Breast epithelium (tissue), 4 donors: ENCODE measurements at regions of chrX and their contacts with region 1.

Region 1: GRCh38 chrX:66882101-66882500 is 243.2 kb upstream of the EDA2R start:
- DNase-seq: no peak
- H3K4me3 ChIP-seq: no peak overlapping the region
- H3K27ac ChIP-seq: no peak overlapping the region
- H3K4me1 ChIP-seq: no peaks in the 10 kb centered on the region
- H3K27me3 ChIP-seq: no peaks in the 10 kb centered on the region
- CTCF ChIP-seq: no peak
- POLR2A ChIP-seq: no peak

Region 2: DNA sequence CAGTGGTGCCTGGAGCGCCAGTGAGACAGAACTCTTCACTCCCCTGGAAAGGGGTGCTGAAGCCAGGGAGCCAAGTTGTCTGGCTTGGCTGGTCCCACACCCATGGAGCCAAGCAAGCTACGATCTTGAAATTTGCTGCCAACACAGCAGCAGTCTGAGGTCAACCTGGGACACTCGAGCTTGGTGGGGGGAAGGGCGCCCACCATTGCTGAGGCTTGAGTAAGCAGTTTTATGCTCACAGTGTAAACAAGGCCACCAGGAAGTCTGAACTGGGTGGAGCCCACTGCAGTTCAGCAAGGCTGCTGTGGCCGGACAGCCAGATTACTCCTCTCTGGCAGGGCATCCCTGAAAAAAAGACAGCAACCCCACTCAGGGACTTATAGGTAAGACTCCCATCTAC is 392.8 kb before region 1 on chrX:
- intact Hi-C with region 1: loop called (anchors 5 kb)
- DNase-seq: no peak
- H3K4me3 ChIP-seq: no peak overlapping the region
- H3K27ac ChIP-seq: no peak overlapping the region
- H3K4me1 ChIP-seq: no peaks in the 10 kb centered on the region
- H3K27me3 ChIP-seq: peaks cover 0 to 13% of the 10 kb centered on the region in 2 donors
- CTCF ChIP-seq: no peak
- POLR2A ChIP-seq: no peak